ENCODE measurements at regions of chr6 and their contacts with region 1.

Region 1: DNA sequence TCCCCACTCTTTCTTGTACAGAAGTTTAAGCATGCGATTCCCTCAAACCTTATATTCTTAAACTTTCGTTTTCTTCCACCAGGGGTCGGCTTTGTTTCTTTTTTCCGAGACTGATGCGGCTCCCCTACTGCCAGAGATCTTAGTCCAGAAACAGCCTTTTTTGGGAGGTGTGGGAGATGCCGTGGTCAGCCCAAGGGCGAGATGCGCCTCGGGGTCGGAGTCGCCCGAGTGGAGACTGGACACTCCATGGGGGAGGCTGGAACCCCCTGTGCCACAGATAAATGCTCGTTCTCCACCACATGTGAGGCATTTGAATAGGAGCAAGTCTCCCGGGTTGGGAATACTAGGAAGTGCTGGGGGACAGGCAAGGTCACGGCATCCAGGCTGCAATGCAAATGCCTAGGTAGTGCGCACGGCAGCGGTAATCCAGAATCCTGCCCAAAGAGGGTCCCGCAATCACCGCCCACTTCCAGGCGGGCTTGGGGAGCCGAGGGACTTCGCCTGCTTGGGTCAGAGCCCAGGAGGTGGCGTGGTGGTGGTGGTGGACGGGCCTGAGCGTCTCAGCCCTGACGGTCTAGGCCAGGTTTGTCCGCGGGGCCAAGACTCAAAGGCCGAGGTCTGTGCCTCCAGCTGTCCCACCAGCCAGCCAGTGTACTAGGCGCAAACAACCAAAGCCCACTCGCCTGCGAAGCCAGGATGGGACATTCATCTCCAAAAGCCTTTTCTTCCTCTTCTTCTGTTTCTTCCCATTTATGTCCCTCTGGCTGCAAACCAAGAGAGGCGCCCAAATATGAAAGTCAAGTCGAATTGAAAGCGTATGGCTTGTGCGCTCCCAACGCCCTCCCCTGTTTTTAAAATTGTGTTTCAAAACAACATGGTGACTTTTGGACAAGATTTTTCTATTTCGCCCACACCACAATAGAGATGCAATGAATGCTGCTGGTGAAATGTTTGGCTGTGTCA is 39.3 kb upstream of the OSTM1 start:
- DNase-seq: peak in 3 of 4 donors; percentile 27 to 37 (median 36)
- ATAC-seq: peak; percentile 45
- H3K4me3 ChIP-seq: no peak overlapping the region
- H3K27ac ChIP-seq: no peak overlapping the region
- H3K4me1 ChIP-seq: peaks cover 44% of the 10 kb centered on the region
- H3K27me3 ChIP-seq: peaks cover 0 to 24% of the 10 kb centered on the region in 2 donors
- CTCF ChIP-seq: peak; percentile 34 to 80 (median 67)
- POLR2A ChIP-seq: no peak

Region 2: GRCh38 chr6:108492131-108492766 is 378.4 kb after region 1 on chr6:
- intact Hi-C with region 1: loop called (anchors 10 kb)
- DNase-seq: peak in 1 of 4 donors; percentile 7
- ATAC-seq: no peak
- H3K4me3 ChIP-seq: no peak overlapping the region
- H3K27ac ChIP-seq: no peak overlapping the region
- H3K4me1 ChIP-seq: peaks cover 18% of the 10 kb centered on the region
- H3K27me3 ChIP-seq: no peaks in the 10 kb centered on the region
- CTCF ChIP-seq: peak; percentile 23 to 64 (median 49)
- POLR2A ChIP-seq: no peak

Region 3: GRCh38 chr6:108526739-108527174 is 412.9 kb after region 1 on chr6:
- intact Hi-C with region 1: loop called (anchors 5 kb)
- DNase-seq: peak in 1 of 4 donors; percentile 19
- ATAC-seq: peak; percentile 48
- H3K4me3 ChIP-seq: no peak overlapping the region
- H3K27ac ChIP-seq: no peak overlapping the region
- H3K4me1 ChIP-seq: no peaks in the 10 kb centered on the region
- H3K27me3 ChIP-seq: no peaks in the 10 kb centered on the region
- CTCF ChIP-seq: peak; percentile 61 to 90 (median 82)
- POLR2A ChIP-seq: no peak

Measured in body of pancreas (tissue), 4 donors.